ENCODE measurements at regions of chr17 and their contacts with region 1.

Region 1: GRCh38 chr17:17540278-17540906 is 44.2 kb upstream of the RASD1 start:
- DNase-seq: no peak

Region 2: DNA sequence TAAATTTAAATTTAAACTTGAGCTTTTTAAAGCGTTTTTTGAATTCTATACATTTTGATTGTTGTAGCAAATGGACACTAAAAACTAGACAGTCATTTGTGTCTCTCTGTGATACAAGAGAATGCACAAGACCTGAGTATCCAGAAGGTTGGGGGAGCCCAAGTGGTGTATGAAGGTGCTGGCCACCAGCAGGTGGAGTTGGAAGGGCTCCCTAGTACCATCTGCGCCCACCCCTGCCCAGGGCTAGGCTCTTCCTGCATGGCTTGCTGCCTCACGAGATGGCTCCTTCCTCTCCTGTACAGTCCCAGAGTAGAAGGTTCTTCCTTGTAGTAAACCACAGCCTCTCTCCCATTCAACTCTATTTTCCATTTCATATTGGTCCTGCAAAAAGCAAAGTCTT is 515.8 kb after region 1 on chr17:
- intact Hi-C with region 1: loop called in 1 of 2 experiments (anchors 5 kb)
- DNase-seq: no peak